Colonic mucosa (tissue), 4 donors: ENCODE measurements at regions of chr3 and their contacts with region 1.

Region 1: DNA sequence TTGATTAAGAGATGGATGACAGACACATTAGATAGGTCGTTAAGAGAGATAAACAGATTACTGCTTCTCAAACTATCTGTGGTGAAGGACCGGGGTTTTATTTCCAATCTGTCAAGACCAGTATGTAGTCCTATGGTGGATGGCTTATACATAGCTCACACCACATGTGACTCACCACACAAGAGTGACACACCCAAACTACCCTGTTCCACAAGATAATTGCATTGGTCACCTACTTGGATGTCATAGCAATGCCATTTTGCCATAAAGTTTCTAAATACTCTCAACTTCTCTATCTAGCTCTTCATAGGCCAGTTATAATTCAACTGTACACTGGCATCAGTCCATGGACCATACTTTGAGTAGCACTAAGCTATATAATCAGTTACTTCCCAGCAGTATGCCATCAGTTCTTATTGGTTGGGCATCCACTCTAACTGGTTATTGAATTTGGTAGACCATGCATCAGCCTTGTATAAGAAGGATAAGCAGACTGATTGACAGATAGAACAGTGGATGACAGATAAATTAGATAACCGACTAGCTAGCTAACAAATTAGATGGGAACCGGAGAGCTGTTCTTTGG is 11.6 kb downstream of the WWTR1 start:
- DNase-seq: no peak
- H3K4me3 ChIP-seq: no peak overlapping the region
- H3K27ac ChIP-seq: no peak overlapping the region
- H3K4me1 ChIP-seq: no peaks in the 10 kb centered on the region
- H3K27me3 ChIP-seq: peaks cover 14% of the 10 kb centered on the region
- CTCF ChIP-seq: no peak

Region 2: GRCh38 chr3:149553781-149554451 is 92.4 kb before region 1 on chr3:
- intact Hi-C with region 1: loop called (anchors 10 kb)
- DNase-seq: no peak
- H3K4me3 ChIP-seq: no peak overlapping the region
- H3K27ac ChIP-seq: peak overlapping the region; percentile 54
- H3K4me1 ChIP-seq: no peaks in the 10 kb centered on the region
- H3K27me3 ChIP-seq: no peaks in the 10 kb centered on the region
- CTCF ChIP-seq: no peak